ENCODE measurements at regions of chr13 and their contacts with region 1.

Region 1: DNA sequence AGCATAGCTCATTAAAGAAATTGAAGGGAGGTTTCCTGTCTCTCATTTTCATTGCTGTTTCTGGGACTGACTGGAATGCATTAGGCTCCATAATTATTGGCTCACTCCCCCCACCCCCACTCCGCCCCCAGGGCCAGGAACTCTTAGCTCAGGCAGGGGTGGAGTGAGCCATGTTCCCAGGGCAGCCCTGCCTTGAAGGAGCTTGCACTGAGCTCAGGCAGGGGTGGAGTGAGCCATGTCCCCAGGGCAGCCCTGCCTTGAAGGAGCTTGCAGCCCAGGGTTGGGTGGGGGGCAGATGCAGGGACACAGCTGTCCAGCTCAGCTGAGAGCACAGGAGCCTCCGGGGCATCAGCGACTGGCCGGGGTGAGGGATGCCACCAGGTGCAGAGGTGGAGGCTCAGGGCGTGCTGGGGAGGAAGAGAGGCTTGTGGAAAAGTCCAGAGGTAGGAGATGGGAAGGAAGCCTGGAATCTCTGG is 39.1 kb upstream of the TFDP1 start:
- DNase-seq: no peak
- ATAC-seq: peak in 7 of 8 donors; percentile 23 to 61 (median 47)
- H3K4me3 ChIP-seq: peak overlapping the region in 4 of 10 donors; percentile 5 to 36 (median 16)
- H3K27ac ChIP-seq: peak overlapping the region in 8 of 10 donors; percentile 18 to 83 (median 64)
- H3K4me1 ChIP-seq: peaks cover 20 to 46% (median 35%) of the 10 kb centered on the region in 9 donors
- H3K27me3 ChIP-seq: no peaks in the 10 kb centered on the region
- CTCF ChIP-seq: no peak

Region 2: GRCh38 chr13:113506025-113506685 is 39.3 kb before region 1 on chr13:
- intact Hi-C with region 1: loop called in 1 of 10 experiments (anchors 5 kb)
- DNase-seq: no peak
- ATAC-seq: peak in 7 of 8 donors; percentile 18 to 54 (median 24)
- H3K4me3 ChIP-seq: no peak overlapping the region
- H3K27ac ChIP-seq: peak overlapping the region in 1 of 10 donors; percentile 12
- H3K4me1 ChIP-seq: peaks cover 0 to 40% (median 19%) of the 10 kb centered on the region in 9 donors
- H3K27me3 ChIP-seq: no peaks in the 10 kb centered on the region
- CTCF ChIP-seq: no peak